Activated CD4-positive, alpha-beta T cell treated with anti-CD3 and anti-CD28 coated beads for 36 hours (primary cell): ENCODE measurements at regions of chr2 and their contacts with region 1.

Region 1: DNA sequence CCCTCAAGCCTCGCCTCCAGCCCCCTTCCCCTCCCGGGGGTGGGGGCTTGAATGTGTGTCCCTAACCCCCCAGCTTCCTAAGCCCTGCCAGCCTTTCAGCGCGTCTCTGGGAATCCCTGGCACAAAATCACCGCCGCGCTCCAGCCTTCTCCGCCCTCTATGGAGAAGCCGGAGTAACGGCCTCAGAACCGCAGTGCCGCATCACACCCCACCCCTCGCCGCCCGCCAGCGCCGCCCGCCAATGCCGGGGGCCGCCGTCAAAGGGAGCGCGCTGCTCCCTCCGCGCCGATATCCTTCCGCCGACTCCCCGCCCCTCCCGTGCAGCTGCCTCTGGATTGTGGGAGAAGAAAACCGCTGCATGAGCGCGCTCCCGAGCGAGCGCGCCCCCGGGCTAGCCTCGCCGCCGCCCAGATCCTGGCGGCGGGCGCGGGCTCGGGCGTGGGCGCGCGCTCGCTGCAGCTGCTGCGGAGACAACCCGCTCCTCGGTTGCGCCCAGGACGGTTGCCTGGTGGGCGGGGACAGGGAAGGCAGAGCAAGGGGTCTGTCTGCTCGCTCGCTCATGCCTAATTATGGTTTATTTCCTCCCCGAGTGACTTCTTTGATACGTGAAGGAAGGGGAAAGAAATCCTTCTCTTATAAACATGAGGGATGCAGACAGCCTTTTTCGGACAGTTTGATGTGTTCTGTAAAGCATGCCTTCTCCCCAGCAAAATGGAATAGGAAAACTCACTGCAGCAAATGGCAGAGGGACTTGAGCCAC is at the start of gene CCDC88A:
- DNase-seq: peak; percentile 92
- ATAC-seq: peak; percentile 88
- H3K4me3 Mint-ChIP-seq: peak within 1 kb of the TSS; percentile 77
- H3K27ac Mint-ChIP-seq: peak within 1 kb of the TSS; percentile 69
- H3K4me1 Mint-ChIP-seq: peaks cover 34% of the 10 kb centered on the region
- H3K27me3 Mint-ChIP-seq: peaks cover 13% of the 10 kb centered on the region
- total RNA-seq, gene CCDC88A: 10.1 to 11.3 TPM

Region 2: DNA sequence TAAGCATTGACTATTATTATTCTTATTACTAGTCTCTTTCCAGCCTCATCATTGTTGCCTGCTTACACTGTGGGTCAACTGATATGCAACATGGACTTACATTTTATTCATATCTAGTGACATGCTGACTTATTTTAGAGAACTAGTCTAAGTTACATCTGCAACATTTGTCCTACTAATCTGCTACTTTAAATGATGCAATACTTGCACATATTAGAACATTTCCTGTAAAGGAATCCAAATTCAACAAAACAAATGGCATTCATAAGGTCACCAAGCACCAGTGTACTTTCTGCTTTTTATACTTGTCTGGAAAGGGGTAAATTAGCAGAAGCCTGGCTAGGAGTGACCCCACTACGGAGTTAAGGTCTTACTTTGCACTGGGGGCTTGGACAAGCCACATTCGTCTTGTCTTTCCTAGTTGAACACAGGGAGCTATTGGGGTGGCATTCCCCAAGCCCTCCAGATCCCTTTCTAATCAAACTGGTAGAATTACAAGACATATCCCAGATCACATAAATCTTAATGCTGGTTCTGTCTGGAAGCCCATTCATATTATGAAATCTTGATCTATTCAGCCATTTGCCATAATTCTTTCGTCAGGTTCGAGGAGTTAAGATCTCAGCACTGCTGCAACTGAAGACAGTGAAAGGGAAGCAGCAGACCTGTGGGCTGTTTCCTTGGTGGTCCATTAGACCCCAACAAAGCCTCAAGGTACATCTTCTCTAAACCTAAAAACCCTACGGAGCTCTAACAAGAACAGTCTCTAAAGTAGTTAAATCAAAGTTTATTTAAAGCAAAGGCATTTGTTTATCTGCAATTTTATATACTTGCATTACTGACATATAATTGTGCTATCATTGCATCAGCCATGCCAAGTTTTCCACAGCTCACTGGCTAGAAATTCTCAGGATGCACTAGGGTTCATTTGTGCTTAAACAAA is 319.7 kb before region 1 on chr2:
- CTCF ChIA-PET with region 1: no interaction called
- POLR2A ChIA-PET with region 1: no interaction called
- intact Hi-C with region 1: no loop called
- DNase-seq: no peak
- ATAC-seq: peak; percentile 60
- H3K4me3 Mint-ChIP-seq: no peak overlapping the region
- H3K27ac Mint-ChIP-seq: peak overlapping the region; percentile 81
- H3K4me1 Mint-ChIP-seq: peaks cover 13% of the 10 kb centered on the region
- H3K27me3 Mint-ChIP-seq: no peaks in the 10 kb centered on the region

Region 3: GRCh38 chr2:55282110-55282917 is 137.5 kb before region 1 on chr2:
- CTCF ChIA-PET with region 1: no interaction called
- POLR2A ChIA-PET with region 1: no interaction called
- intact Hi-C with region 1: loop called (anchors 1 to 5 kb)
- DNase-seq: peak; percentile 91
- ATAC-seq: peak; percentile 99
- H3K4me3 Mint-ChIP-seq: peak overlapping the region; percentile 86
- H3K27ac Mint-ChIP-seq: peak overlapping the region; percentile 94
- H3K4me1 Mint-ChIP-seq: peaks cover 14% of the 10 kb centered on the region
- H3K27me3 Mint-ChIP-seq: no peaks in the 10 kb centered on the region

Region 4: DNA sequence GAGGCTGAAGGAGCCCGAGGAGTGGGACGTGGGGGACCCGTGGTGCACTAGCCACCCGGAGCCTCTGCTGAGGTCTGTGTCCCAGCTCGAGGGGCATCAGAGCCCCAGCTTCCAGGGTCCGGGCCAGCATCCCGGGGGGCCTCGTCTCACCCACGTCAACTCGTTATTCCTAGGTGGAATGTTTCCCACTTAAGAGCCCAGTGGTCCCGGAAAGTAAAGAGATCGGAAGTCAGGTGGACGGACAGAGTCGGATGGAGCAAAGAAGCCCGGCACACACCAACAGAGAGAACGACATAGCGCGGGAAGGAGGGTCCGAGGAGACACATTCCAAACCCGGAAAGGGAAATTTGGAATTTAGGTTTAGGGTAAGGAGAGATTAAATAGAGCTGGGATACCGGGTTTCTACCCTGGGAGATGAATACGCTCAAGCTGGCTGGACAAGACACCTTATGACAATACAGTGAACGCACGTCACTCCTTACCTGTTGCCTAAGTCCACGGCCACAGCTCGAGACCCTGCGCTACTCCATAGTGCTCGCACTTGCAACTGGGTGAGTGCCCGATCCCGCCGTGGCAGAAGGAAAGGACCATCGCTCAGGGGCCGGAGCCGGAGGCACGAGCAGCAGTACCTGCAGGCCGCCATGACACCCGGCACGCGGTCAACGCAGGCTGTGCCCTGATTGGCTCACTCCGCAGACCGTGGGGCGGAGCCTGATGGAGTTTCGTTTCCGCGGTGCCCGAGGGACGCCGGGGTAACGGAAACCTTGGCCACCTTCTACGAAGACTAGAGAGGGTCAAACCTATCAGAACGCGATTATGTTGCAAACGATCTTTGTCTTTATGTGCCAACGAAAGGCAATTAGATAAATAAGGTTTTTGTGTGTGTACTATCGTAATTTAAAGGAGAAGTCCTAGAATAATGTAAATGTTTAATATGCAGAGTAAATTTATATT is 273.6 kb after region 1 on chr2 and contains the start of gene PNPT1:
- CTCF ChIA-PET with region 1: no interaction called
- POLR2A ChIA-PET with region 1: no interaction called
- intact Hi-C with region 1: loop called in 1 of 2 experiments (anchors 1 kb)
- DNase-seq: peak; percentile 97
- ATAC-seq: peak; percentile 100
- H3K4me3 Mint-ChIP-seq: peak within 1 kb of the TSS; percentile 98
- H3K27ac Mint-ChIP-seq: peak within 1 kb of the TSS; percentile 96
- H3K4me1 Mint-ChIP-seq: peaks cover 32% of the 10 kb centered on the region
- H3K27me3 Mint-ChIP-seq: no peaks in the 10 kb centered on the region
- total RNA-seq, gene PNPT1: 41.1 to 54.0 TPM